Mammary epithelial cell (primary cell): ENCODE measurements at regions of chr5 and their contacts with region 1.

Region 1: DNA sequence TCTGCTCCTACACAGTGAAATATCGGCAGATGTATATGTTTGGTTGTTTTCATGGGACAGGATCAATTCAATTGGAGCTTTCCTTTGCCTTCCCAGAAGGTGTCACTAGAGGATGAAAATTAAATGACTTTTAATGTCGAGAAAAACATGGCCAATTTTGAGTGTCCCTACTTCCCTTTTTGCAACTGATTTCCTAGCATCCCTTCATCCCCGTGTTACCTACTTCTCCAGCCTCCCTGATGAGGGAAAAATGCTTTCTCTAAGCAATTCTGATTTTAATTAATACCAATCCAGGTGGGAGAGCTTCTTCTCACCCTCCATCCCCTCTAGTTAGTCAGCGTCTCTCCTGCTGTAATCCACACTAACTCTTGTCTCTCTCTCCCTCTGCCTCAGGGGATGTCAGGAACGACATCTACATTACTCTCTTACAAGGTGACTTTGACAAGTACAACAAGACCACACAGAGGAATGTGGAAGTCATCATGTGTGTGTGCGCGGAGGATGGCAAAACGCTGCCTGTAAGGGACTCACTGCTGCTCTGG is 64.9 kb downstream of the DOCK2 start:
- DNase-seq: peak; percentile 18
- H3K4me3 ChIP-seq: no peak overlapping the region
- H3K27ac ChIP-seq: no peak overlapping the region
- H3K4me1 ChIP-seq: peaks cover 7% of the 10 kb centered on the region
- H3K27me3 ChIP-seq: no peaks in the 10 kb centered on the region
- CTCF ChIP-seq: peak; percentile 52 to 62

Region 2: GRCh38 chr5:169826618-169827017 is 124.6 kb after region 1 on chr5:
- CTCF ChIA-PET with region 1: interaction called, 7 read pairs
- dilution Hi-C with region 1: no loop called
- in situ Hi-C with region 1: no loop called
- intact Hi-C with region 1: loop called (anchors 1 kb)
- DNase-seq: no peak
- H3K4me3 ChIP-seq: no peak overlapping the region
- H3K27ac ChIP-seq: no peak overlapping the region
- H3K4me1 ChIP-seq: peaks cover 5% of the 10 kb centered on the region
- H3K27me3 ChIP-seq: no peaks in the 10 kb centered on the region
- CTCF ChIP-seq: peak; percentile 13 to 37

Region 3: DNA sequence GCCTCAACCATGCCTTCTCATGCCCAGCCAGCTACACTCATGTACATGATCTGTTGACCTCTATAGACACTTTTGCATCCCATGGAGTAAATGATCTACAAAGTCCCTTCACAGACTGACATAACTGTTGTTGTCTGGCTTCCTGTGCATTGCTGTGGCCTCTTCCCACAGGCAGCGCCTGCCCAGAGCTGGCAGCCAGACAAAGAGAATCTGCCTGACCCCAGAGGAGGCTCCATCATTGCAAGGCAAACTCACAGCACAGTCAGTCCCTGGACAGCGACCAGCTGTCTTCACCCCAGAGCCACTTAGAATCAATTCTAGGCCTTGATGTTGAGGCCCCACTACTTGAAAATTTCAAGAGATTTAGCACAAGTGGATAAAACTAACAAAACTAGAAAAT is 212.8 kb after region 1 on chr5:
- CTCF ChIA-PET with region 1: no interaction called
- dilution Hi-C with region 1: no loop called
- in situ Hi-C with region 1: no loop called
- intact Hi-C with region 1: loop called (anchors 5 kb)
- DNase-seq: peak; percentile 13
- H3K4me3 ChIP-seq: no peak overlapping the region
- H3K27ac ChIP-seq: no peak overlapping the region
- H3K4me1 ChIP-seq: no peaks in the 10 kb centered on the region
- H3K27me3 ChIP-seq: no peaks in the 10 kb centered on the region
- CTCF ChIP-seq: no peak

Region 4: GRCh38 chr5:169980418-169981053 is 278.6 kb after region 1 on chr5 and contains the start of gene INSYN2B:
- CTCF ChIA-PET with region 1: interaction called, 31 read pairs
- dilution Hi-C with region 1: no loop called
- in situ Hi-C with region 1: loop called in 1 of 2 experiments (anchors 5 kb)
- intact Hi-C with region 1: loop called (anchors 1 kb)
- DNase-seq: peak; percentile 83
- H3K4me3 ChIP-seq: peak within 1 kb of the TSS; percentile 51 to 85 (median 77)
- H3K27ac ChIP-seq: peak within 1 kb of the TSS; percentile 93
- H3K4me1 ChIP-seq: peaks cover 38% of the 10 kb centered on the region
- H3K27me3 ChIP-seq: no peaks in the 10 kb centered on the region
- CTCF ChIP-seq: peak; percentile 57 to 74
- total RNA-seq, gene INSYN2B: 2.0 to 8.7 TPM

Region 5: GRCh38 chr5:170070556-170071412 is 368.8 kb after region 1 on chr5:
- CTCF ChIA-PET with region 1: interaction called, 9 read pairs
- dilution Hi-C with region 1: no loop called
- in situ Hi-C with region 1: no loop called
- intact Hi-C with region 1: loop called (anchors 2 kb)
- DNase-seq: peak; percentile 9
- H3K4me3 ChIP-seq: no peak overlapping the region
- H3K27ac ChIP-seq: no peak overlapping the region
- H3K4me1 ChIP-seq: no peaks in the 10 kb centered on the region
- H3K27me3 ChIP-seq: peaks cover 3% of the 10 kb centered on the region
- CTCF ChIP-seq: peak; percentile 62 to 77

Region 6: DNA sequence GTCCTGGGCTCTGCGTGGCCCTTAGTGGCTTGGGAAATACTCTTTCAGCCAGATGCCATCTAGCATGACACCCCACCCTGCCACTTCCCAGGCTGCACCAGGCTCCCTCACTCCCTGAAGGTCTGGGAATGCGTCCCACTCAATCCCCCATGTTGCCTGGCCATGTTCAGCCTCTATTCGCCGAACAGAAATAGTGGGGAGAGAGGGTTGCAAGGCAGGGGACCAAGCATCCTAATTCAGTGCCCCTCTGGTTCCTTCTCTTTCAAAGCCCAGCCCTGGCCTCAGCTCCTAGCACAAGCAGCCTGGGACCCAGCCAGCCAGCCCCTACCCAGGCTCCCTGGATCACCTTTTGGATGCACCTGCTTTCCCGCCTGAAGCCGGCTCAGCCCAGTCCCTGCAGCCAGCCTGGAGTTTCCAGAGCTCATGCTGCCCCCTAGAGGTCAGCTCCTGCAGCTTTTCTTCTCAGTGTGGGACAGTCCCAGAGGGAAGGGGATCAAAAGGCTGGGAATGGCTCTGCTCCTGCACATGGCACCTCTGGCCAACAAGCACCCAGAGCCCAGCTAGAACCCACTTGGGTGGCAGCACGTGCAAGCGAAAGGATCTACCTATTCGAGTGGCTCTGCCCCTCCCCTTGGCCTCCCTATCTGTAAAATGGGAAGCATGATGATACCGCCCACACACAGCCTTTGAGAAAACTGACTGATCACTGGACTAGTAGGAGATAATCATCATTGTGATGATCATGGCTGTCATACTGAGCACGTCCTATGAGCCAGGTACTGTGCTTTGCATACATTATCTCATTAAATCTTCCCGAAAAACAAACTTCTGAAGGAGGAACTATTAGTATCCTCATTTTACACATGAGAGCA is 482.1 kb after region 1 on chr5:
- CTCF ChIA-PET with region 1: no interaction called
- dilution Hi-C with region 1: no loop called
- in situ Hi-C with region 1: no loop called
- intact Hi-C with region 1: loop called (anchors 10 kb)
- DNase-seq: peak; percentile 35
- H3K4me3 ChIP-seq: no peak overlapping the region
- H3K27ac ChIP-seq: no peak overlapping the region
- H3K4me1 ChIP-seq: no peaks in the 10 kb centered on the region
- H3K27me3 ChIP-seq: no peaks in the 10 kb centered on the region
- CTCF ChIP-seq: peak; percentile 85 to 91

Region 7: DNA sequence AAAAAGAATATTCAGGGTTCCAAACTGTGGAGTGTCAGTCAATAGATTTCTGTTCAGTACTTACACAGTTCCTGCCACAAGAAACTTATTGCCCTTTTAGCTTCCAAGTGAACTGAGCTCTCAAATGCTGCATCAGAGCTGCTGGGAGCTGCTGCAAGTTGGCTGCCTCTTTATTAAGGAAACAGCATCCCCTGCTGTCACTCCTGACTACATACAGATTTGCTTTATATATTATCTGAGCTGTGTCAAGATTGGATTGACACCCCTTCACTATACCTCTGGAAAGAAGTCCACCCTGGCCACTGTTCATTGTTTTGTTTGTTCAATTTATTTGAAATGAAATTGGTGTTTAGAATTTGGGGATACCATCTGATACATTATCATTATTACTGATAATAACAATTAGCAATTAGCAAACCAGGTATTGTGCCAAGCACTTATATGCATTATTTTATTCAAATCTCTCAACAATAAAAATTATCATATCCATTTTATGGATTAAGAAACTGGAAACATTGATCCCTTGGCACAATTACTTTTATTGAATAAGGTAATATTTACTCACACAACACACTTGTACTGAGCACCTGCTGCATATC is 514.4 kb after region 1 on chr5:
- CTCF ChIA-PET with region 1: interaction called, 11 read pairs
- dilution Hi-C with region 1: no loop called
- in situ Hi-C with region 1: no loop called
- intact Hi-C with region 1: loop called (anchors 2 kb)
- DNase-seq: peak; percentile 45
- H3K4me3 ChIP-seq: no peak overlapping the region
- H3K27ac ChIP-seq: no peak overlapping the region
- H3K4me1 ChIP-seq: peaks cover 31% of the 10 kb centered on the region
- H3K27me3 ChIP-seq: no peaks in the 10 kb centered on the region
- CTCF ChIP-seq: peak; percentile 89